ENCODE measurements at regions of chr14 and their contacts with region 1.

Region 1: GRCh38 chr14:30005114-30005808 is 77.6 kb upstream of the PRKD1 start:
- DNase-seq: no peak
- ATAC-seq: peak; percentile 73 to 83
- H3K4me3 ChIP-seq: no peak overlapping the region
- H3K27ac ChIP-seq: no peak overlapping the region
- H3K4me1 ChIP-seq: no peaks in the 10 kb centered on the region
- H3K27me3 ChIP-seq: no peaks in the 10 kb centered on the region

Region 2: GRCh38 chr14:29548948-29549370 is 456.3 kb before region 1 on chr14:
- intact Hi-C with region 1: loop called (anchors 2 to 5 kb)
- DNase-seq: no peak
- ATAC-seq: peak; percentile 72 to 77
- H3K4me3 ChIP-seq: no peak overlapping the region
- H3K27ac ChIP-seq: no peak overlapping the region
- H3K4me1 ChIP-seq: peaks cover 2% of the 10 kb centered on the region
- H3K27me3 ChIP-seq: no peaks in the 10 kb centered on the region

Region 3: DNA sequence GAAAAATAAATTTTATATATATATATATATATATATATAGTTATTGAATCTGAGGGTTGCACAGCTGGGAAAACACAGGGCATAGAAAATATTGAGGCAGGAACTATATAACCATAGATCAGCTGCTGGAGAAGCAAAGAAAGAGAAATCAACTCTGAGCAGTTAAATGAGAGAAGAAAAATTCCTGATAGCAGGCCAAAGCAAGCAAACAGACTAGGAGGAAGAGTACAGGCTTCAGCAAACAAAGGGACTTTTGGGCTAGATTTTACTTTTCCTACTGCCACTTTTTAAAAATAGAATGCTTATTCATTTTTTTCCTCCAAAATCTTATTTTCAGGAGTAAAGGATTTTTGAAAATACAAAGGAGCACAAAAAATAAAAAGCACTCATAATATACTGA is 138.4 kb after region 1 on chr14:
- intact Hi-C with region 1: no loop called
- DNase-seq: no peak
- ATAC-seq: no peak
- H3K4me3 ChIP-seq: no peak overlapping the region
- H3K27ac ChIP-seq: no peak overlapping the region
- H3K4me1 ChIP-seq: no peaks in the 10 kb centered on the region
- H3K27me3 ChIP-seq: no peaks in the 10 kb centered on the region